Motor neuron (in vitro differentiated cells): ENCODE measurements at regions of chr14 and their contacts with region 1.

Region 1: DNA sequence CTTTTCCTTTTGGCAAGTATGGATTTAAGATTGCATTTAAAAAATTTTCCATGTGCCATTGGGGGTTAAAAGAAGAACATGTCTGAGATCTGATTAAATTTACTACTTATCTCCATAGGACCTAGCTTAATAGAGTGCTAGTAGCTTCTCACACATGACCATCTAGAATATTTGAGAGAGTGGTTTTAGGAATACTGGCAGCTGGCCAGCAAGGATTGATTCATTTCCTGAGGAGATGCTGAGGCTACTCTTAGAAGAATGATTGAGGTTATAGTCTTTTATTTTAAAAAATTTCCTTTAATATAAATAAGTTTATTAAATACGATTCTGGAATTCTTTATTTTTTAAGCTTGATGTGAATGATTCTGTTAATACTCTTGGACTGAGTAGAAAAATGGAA is 56.2 kb downstream of the MIPOL1 start:
- ATAC-seq: no peak
- H3K4me3 ChIP-seq: no peak overlapping the region
- H3K27ac ChIP-seq: no peak overlapping the region
- H3K4me1 ChIP-seq: peaks cover 0 to 5% of the 10 kb centered on the region in 2 donors

Region 2: DNA sequence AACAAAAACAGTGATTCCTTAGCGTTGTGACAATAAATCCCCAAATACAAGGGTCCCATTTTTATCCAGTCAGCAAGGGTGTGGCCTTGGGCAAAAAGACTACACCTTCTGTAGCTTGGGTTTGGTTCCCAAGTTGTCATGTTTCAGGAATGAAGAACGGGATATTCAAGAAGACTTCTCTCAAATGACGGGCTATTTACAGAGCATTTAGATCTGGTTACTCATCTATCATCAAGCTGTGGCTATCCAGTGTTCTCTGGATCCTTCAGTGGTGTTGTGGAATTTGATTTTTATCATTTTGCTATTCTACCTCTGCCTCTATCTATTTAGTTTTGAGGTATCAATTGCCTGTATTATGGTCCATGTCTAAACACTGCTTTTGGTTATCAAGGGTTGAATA is 301.2 kb before region 1 on chr14:
- in situ Hi-C with region 1: no loop called
- ATAC-seq: peak in 2 of 8 experiments; percentile 96 to 99
- H3K4me3 ChIP-seq: no peak overlapping the region
- H3K27ac ChIP-seq: no peak overlapping the region
- H3K4me1 ChIP-seq: no peaks in the 10 kb centered on the region

Region 3: GRCh38 chr14:37060493-37061260 is 193.2 kb before region 1 on chr14:
- in situ Hi-C with region 1: no loop called
- ATAC-seq: no peak
- H3K4me3 ChIP-seq: no peak overlapping the region
- H3K27ac ChIP-seq: no peak overlapping the region
- H3K4me1 ChIP-seq: peaks cover 0 to 3% of the 10 kb centered on the region in 2 donors

Region 4: DNA sequence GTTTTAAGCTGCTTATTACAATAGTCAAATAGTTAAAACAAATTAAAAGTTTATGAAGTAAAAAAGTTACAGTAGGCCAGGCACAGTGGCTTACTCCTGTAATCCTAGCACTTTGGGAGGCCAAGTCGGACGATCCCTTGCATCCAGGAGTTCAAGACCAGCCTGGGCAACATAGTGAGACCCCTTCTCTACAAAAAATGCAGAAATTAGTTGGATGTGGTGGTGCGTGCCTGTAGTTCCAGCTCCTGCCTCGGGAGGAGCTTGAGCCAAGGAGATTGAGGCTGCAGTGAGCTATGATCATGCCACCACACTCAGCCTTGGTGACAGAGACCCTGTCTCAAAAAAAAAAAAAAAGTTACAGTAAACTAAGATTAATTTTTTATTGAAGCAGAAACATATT is 86.5 kb after region 1 on chr14:
- in situ Hi-C with region 1: no loop called
- ATAC-seq: no peak
- H3K4me3 ChIP-seq: no peak overlapping the region
- H3K27ac ChIP-seq: no peak overlapping the region
- H3K4me1 ChIP-seq: no peaks in the 10 kb centered on the region

Region 5: DNA sequence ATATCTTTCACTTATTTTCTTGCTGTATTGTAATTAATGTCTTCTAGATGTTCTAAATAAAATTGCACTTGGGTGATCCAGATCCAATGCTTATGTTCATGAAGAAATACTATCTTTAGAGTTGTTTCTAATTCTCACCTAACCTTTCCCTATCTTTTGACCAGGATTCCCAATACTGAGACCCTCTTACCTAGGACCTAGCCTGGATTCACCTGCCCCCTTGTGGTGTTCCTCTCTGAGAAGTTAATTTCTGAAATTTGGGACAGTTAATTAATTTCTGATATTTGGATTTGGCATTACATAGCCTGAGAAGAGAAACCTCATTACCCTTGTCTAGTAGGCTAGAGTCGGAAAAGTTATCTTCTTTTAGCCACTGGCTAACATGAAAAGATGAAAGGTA is 311.6 kb after region 1 on chr14:
- in situ Hi-C with region 1: loop called in 1 of 9 experiments (anchors 25 kb)
- ATAC-seq: peak in 1 of 8 experiments; percentile 27
- H3K4me3 ChIP-seq: peak overlapping the region in 1 of 5 donors; percentile 1
- H3K27ac ChIP-seq: no peak overlapping the region
- H3K4me1 ChIP-seq: peaks cover 0 to 2% of the 10 kb centered on the region in 2 donors

Region 6: DNA sequence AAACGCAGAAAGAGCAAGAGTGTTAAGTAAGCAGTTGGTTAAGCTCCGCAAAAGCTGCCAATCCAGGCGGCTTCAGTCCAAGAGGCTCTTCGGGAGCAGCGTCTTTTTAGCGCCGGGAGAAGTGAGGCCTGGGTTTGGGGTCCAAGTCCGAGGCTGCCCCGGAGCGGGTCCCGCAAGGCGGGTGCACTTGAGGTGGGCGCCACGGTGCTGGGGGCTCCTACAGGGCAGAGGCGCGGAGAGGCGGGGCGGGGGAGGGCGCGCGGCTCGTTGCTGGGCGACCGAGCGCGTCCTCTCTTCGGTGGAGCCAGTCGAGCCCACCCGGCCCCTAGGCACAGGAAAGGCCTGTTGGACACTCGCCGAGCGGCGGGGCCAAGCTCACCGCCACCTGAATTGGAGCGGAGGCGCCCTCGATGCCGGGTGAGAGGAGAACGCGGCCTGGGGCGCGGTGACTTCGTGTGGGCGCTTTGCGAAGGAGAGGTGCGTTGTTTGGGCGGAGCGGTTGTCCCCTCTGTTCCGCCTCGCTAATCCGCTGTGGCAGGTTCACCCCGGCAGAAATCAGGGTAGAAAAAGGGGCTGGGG is 357.1 kb after region 1 on chr14:
- in situ Hi-C with region 1: no loop called
- ATAC-seq: no peak
- H3K4me3 ChIP-seq: no peak overlapping the region
- H3K27ac ChIP-seq: no peak overlapping the region
- H3K4me1 ChIP-seq: no peaks in the 10 kb centered on the region